H1 (cell line): ENCODE measurements at regions of chr14 and their contacts with region 1.

Region 1: DNA sequence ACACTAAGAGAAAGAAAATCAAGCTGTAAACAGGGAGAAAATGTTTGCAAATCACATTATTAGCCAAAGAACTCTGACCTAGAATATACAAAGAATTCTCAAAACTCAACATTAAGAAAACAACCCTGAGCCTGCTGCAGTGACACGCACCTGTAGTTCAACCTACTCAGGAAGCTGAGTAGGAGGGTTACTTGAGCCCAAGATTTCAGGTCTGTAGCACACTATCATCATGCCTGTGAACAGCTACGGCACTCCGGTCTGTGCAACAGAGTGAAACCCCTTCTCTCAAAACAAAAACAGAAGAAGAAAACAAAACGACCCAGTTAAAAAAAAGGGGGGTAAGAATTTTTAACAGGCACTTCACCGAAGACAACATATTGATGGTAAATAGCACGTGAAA is 20.8 kb downstream of the SAV1 start:
- DNase-seq: no peak
- H3K4me3 ChIP-seq: no peak overlapping the region
- H3K27ac ChIP-seq: no peak overlapping the region
- H3K4me1 ChIP-seq: 0 out of 7 replicates have a peak, but pooled peaks cover 0 to 5% (median under 1%) of the 10 kb centered on the region in 4 experiments
- H3K27me3 ChIP-seq: no peaks in the 10 kb centered on the region
- CTCF ChIP-seq: no peak
- EP300 ChIP-seq: no peak
- POLR2A ChIP-seq: no peak
- RAD21 ChIP-seq: no peak

Region 2: GRCh38 chr14:50573858-50574257 is 73.4 kb before region 1 on chr14:
- CTCF ChIA-PET with region 1: no interaction called
- POLR2A ChIA-PET with region 1: no interaction called
- DNase-seq: no peak
- H3K4me3 ChIP-seq: no peak overlapping the region
- H3K27ac ChIP-seq: no peak overlapping the region
- H3K4me1 ChIP-seq: no peaks in the 10 kb centered on the region
- H3K27me3 ChIP-seq: no peaks in the 10 kb centered on the region
- CTCF ChIP-seq: no peak
- EP300 ChIP-seq: no peak
- POLR2A ChIP-seq: no peak
- RAD21 ChIP-seq: no peak

Region 3: DNA sequence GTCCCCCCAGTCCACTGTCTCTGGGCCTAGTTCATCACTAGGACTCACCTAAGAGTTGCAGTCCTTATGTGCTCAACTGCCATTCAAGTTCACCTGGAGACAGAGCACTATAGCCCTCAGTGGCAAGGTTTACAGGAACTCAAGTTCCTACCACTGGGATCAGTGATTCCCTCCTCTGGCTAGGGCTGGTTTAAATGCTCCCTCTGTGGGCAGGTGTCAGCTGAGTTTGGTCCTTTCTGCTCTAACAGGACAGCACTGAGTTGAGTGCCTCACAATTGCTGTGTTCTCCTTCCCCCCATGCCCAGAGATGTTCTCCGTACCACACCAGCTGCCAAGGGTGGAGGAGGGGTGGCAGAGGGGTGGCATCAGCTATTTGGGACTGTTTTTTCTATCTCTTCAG is 41.6 kb after region 1 on chr14:
- CTCF ChIA-PET with region 1: interaction called, 10 read pairs
- POLR2A ChIA-PET with region 1: no interaction called
- DNase-seq: no peak
- H3K4me3 ChIP-seq: no peak overlapping the region
- H3K27ac ChIP-seq: no peak overlapping the region
- H3K4me1 ChIP-seq: no peaks in the 10 kb centered on the region
- H3K27me3 ChIP-seq: no peaks in the 10 kb centered on the region
- CTCF ChIP-seq: peak; percentile 21 to 43 (median 42); a peak in 3 of 4 replicates
- EP300 ChIP-seq: no peak
- POLR2A ChIP-seq: no peak
- RAD21 ChIP-seq: peak; percentile 54 to 61

Region 4: DNA sequence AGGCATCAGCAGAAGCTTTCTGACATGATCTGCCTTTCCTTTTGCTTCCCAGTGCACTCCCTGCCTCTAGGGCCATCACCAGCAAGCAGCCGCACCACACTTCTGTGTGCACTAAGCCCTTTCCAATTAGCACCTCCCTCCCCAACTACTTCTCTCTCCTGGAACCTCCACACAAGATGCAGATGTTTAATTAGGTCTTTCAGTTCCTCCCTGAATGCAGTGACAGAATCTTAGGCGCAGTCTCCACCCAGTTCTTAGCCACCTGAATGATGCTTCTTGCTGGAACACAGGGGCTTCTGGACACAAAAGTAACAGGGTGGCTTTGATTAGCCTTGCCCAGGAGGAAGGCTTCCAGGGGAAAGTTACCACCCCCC is 150.8 kb after region 1 on chr14:
- CTCF ChIA-PET with region 1: no interaction called
- POLR2A ChIA-PET with region 1: no interaction called
- DNase-seq: no peak
- H3K4me3 ChIP-seq: no peak overlapping the region
- H3K27ac ChIP-seq: no peak overlapping the region
- H3K4me1 ChIP-seq: no peaks in the 10 kb centered on the region
- H3K27me3 ChIP-seq: no peaks in the 10 kb centered on the region
- CTCF ChIP-seq: no peak
- EP300 ChIP-seq: no peak
- POLR2A ChIP-seq: no peak
- RAD21 ChIP-seq: no peak